H1 (cell line): ENCODE measurements at regions of chr1 and their contacts with region 1.

Region 1: GRCh38 chr1:180188091-180188506 is 33.4 kb downstream of the QSOX1 start:
- DNase-seq: peak in 1 of 2 experiments; percentile 81
- H3K4me3 ChIP-seq: no peak overlapping the region
- H3K27ac ChIP-seq: no peak overlapping the region
- H3K4me1 ChIP-seq: no peaks in the 10 kb centered on the region
- H3K27me3 ChIP-seq: no peaks in the 10 kb centered on the region
- CTCF ChIP-seq: peak; percentile 87 to 94 (median 92)
- EP300 ChIP-seq: no peak
- POLR2A ChIP-seq: no peak
- RAD21 ChIP-seq: peak; percentile 94 to 96

Region 2: DNA sequence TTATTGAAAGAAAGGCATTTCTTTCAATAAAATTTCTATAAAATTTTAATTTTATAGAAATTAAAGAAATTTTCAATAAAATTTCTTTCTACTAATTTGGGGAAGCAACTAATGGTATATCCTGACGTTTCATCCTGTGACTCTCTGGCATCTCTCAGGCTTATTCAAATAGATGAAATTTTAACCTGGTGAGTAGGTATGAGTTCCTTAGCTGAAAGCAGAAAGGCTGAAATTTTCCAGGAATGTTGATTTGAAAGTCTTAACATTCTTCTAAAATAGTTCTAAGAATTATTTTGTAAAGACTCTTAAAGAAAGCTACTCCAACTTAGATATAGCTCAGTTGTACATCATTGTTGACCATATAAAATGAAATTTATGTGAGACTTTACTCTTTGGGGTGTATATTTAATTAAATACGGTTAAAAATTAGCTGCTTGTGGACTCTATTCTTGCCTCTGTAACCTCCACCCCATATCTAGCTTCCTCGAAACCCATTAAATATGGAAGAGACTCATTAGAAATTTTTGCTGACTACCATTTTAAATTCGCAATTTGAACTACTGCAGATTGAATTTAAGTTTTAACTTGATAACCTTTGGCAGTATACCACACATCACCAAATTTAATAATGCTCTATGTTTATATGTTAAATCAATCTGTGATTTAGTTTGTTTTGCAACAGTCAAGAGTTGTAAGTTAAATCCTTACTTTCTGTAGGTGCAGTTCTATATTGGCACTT is 122.1 kb before region 1 on chr1:
- CTCF ChIA-PET with region 1: no interaction called
- POLR2A ChIA-PET with region 1: no interaction called
- DNase-seq: no peak
- H3K4me3 ChIP-seq: no peak overlapping the region
- H3K27ac ChIP-seq: no peak overlapping the region
- H3K4me1 ChIP-seq: no peaks in the 10 kb centered on the region
- H3K27me3 ChIP-seq: no peaks in the 10 kb centered on the region
- CTCF ChIP-seq: no peak
- EP300 ChIP-seq: no peak
- POLR2A ChIP-seq: no peak
- RAD21 ChIP-seq: no peak

Region 3: DNA sequence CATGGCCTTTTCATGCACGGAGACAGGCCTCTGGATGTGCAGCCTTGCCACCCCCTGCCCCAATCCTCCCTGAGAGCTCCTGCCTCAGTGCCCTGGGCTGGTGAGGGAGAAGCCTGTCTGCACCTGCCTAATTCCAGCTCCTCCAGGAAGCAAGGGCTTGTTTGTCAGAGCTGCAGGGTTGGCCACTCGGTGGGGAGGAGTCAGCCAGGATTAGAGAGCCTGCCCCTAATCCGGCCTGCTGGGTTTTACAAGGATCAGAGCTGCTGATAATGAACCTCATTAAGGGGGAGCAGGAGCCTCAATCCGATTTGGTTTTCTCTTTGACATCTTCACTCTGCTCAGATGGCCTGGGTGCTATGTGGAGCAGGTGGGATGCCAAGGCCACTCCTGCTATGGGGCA is 10.1 kb after region 1 on chr1:
- CTCF ChIA-PET with region 1: interaction called, 160 read pairs
- POLR2A ChIA-PET with region 1: interaction called, 7 read pairs
- DNase-seq: no peak
- H3K4me3 ChIP-seq: no peak overlapping the region
- H3K27ac ChIP-seq: no peak overlapping the region
- H3K4me1 ChIP-seq: peaks cover 0 to 1% (median 0%) of the 10 kb centered on the region in 4 experiments; a peak in 1 of 7 replicates
- H3K27me3 ChIP-seq: no peaks in the 10 kb centered on the region
- CTCF ChIP-seq: no peak
- EP300 ChIP-seq: no peak
- POLR2A ChIP-seq: no peak
- RAD21 ChIP-seq: no peak

Region 4: DNA sequence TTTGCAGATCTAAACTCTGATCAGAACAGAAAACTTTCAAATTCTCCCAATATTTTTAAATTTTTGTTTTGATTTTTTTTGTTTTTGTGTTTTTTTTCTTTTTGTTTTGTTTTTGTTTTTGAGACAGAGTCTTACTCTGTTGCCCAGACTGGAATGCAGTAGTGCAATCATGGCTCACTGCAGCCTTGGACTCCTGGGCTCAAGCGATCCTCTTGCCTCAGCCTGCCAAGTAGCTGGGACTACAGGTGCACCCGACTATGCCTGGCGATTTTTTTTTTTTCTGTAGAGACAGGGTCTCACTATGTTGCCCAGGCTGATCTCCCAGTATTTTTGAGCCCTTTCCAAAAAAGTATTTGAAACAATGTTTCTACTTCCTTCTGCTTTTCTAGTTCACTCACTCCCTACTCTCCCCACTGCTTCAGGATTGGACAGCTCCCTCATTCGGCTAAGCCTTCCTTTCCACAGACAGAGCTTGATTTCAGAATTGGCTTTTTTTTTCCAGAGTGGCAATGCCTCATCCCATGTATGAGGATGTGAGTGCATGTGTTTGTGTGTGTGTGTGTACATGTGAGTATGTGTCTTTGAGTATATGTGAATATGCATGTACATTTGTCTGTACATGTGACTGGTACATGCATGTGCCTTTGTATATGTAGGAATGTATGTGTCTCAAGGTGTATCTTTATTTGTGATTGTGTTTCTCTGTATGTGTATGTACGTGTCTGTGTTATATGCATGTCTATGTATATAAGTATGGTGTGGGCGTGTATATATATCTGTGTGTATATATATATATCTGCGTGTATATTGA is 53.8 kb after region 1 on chr1:
- CTCF ChIA-PET with region 1: interaction called, 33 read pairs
- POLR2A ChIA-PET with region 1: no interaction called
- DNase-seq: no peak
- H3K4me3 ChIP-seq: no peak overlapping the region
- H3K27ac ChIP-seq: no peak overlapping the region
- H3K4me1 ChIP-seq: peaks cover 19 to 46% (median 30%) of the 10 kb centered on the region in 4 experiments
- H3K27me3 ChIP-seq: peaks cover 0 to 11% (median 7%) of the 10 kb centered on the region in 4 experiments; a peak in 6 of 7 replicates
- CTCF ChIP-seq: no peak
- EP300 ChIP-seq: no peak
- POLR2A ChIP-seq: no peak
- RAD21 ChIP-seq: no peak

Region 5: GRCh38 chr1:180269761-180270527 is 81.8 kb after region 1 on chr1:
- CTCF ChIA-PET with region 1: interaction called, 16 read pairs
- POLR2A ChIA-PET with region 1: no interaction called
- DNase-seq: peak in 1 of 2 experiments; percentile 63
- H3K4me3 ChIP-seq: no peak overlapping the region
- H3K27ac ChIP-seq: no peak overlapping the region
- H3K4me1 ChIP-seq: peaks cover 15 to 48% (median 31%) of the 10 kb centered on the region in 4 experiments
- H3K27me3 ChIP-seq: no peaks in the 10 kb centered on the region; a peak in 1 of 7 replicates
- CTCF ChIP-seq: peak; percentile 50 to 85 (median 82)
- EP300 ChIP-seq: no peak
- POLR2A ChIP-seq: no peak
- RAD21 ChIP-seq: peak; percentile 46 to 60

Region 6: GRCh38 chr1:180482425-180483275 is 294.6 kb after region 1 on chr1:
- CTCF ChIA-PET with region 1: interaction called, 17 read pairs
- POLR2A ChIA-PET with region 1: no interaction called
- DNase-seq: no peak
- H3K4me3 ChIP-seq: no peak overlapping the region
- H3K27ac ChIP-seq: no peak overlapping the region
- H3K4me1 ChIP-seq: peaks cover 0 to 5% (median 1%) of the 10 kb centered on the region in 4 experiments; a peak in 3 of 7 replicates
- H3K27me3 ChIP-seq: no peaks in the 10 kb centered on the region
- CTCF ChIP-seq: peak in 2 of 3 experiments; percentile 27 to 54; a peak in 2 of 4 replicates
- EP300 ChIP-seq: no peak
- POLR2A ChIP-seq: no peak
- RAD21 ChIP-seq: peak; percentile 33; a peak in 3 of 4 replicates